B cell (primary cell): ENCODE measurements at regions of chr18 and their contacts with region 1.

Region 1: GRCh38 chr18:21805771-21806366 is 65.3 kb downstream of the MIB1 start:
- DNase-seq: no peak
- ATAC-seq: no peak
- H3K4me3 ChIP-seq: no peak overlapping the region
- H3K4me3 Mint-ChIP-seq: no peak overlapping the region
- H3K27ac ChIP-seq: no peak overlapping the region
- H3K27ac Mint-ChIP-seq: no peak overlapping the region
- H3K4me1 ChIP-seq: no peaks in the 10 kb centered on the region
- H3K4me1 Mint-ChIP-seq: no peaks in the 10 kb centered on the region
- H3K27me3 ChIP-seq: no peaks in the 10 kb centered on the region
- H3K27me3 Mint-ChIP-seq: no peaks in the 10 kb centered on the region
- CTCF ChIP-seq: no peak

Region 2: DNA sequence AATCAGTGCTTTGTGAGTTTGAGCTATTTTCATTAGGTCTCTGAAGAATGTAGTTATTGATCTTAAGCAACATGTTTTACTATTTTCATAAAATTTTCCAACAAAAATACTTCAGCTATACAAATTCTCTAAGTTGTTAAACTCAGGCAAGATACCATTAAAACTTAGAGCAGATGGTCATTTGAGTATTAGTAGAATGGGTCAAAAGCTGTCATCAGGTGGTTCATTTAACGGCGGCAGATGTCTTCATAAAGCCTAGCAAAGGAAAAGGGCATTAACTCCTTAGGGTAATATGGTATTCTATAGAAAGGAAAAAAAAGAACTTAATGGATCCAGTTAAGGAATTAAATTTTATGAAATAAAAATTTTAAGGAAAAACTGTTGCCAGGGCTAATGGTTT is 46.0 kb before region 1 on chr18:
- CTCF ChIA-PET with region 1: no interaction called
- POLR2A ChIA-PET with region 1: no interaction called
- intact Hi-C with region 1: loop called (anchors 5 kb)
- DNase-seq: no peak
- ATAC-seq: no peak
- H3K4me3 ChIP-seq: no peak overlapping the region
- H3K4me3 Mint-ChIP-seq: no peak overlapping the region
- H3K27ac ChIP-seq: no peak overlapping the region
- H3K27ac Mint-ChIP-seq: no peak overlapping the region
- H3K4me1 ChIP-seq: peaks cover 0 to 3% of the 10 kb centered on the region in 2 donors
- H3K4me1 Mint-ChIP-seq: peaks cover 10% of the 10 kb centered on the region
- H3K27me3 ChIP-seq: no peaks in the 10 kb centered on the region
- H3K27me3 Mint-ChIP-seq: no peaks in the 10 kb centered on the region
- CTCF ChIP-seq: no peak

Region 3: DNA sequence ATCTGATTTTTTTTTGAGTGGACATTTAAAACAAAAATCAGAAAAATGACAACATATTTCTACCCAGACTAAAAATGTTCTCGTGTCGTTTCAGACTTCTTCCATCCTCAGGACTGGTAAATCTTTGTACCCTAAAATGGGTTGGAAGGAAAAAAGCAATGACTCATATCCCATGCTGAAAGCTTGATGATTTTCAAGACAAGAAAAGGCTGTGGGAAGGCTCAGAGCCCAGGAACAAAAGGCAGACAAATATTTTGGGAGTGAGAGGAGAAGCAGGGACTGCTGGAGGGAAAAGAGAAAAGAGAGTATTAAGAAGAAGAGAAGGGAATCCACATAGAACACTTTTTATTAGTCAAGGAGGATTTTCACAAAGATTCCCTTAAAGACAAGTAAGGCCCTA is 688.9 kb after region 1 on chr18:
- CTCF ChIA-PET with region 1: no interaction called
- POLR2A ChIA-PET with region 1: no interaction called
- intact Hi-C with region 1: no loop called
- DNase-seq: no peak
- ATAC-seq: no peak
- H3K4me3 ChIP-seq: no peak overlapping the region
- H3K4me3 Mint-ChIP-seq: no peak overlapping the region
- H3K27ac ChIP-seq: no peak overlapping the region
- H3K27ac Mint-ChIP-seq: no peak overlapping the region
- H3K4me1 ChIP-seq: no peaks in the 10 kb centered on the region
- H3K4me1 Mint-ChIP-seq: no peaks in the 10 kb centered on the region
- H3K27me3 ChIP-seq: no peaks in the 10 kb centered on the region
- H3K27me3 Mint-ChIP-seq: peaks cover 5% of the 10 kb centered on the region
- CTCF ChIP-seq: no peak